ENCODE measurements at regions of chr5 and their contacts with region 1.

Region 1: DNA sequence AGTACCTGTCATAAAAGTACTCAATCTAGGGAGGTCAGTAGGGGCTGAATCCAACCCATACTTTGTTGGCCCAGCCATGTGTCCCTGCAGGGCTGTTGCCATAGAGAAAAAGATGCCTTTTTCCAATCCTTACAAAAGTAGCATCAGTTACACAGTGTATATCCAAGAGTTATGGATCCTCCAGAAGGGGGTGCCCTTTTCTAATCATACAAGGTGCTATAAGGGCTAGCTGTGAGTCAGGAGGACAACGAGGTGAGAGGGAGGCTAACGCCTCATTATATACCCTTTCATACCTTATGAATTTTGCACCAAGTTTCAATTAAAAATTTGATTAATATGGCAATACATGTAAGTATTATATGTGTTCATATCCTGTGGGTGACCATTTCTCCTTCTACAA is 4.8 kb downstream of the KIAA0825 start:
- DNase-seq: peak; percentile 33
- ATAC-seq: peak; percentile 43
- H3K4me3 ChIP-seq: no peak overlapping the region
- H3K27ac ChIP-seq: no peak overlapping the region
- H3K4me1 ChIP-seq: peaks cover 5 to 7% of the 10 kb centered on the region in 2 experiments
- H3K27me3 ChIP-seq: no peaks in the 10 kb centered on the region
- CTCF ChIP-seq: peak; percentile 31 to 51 (median 42); a peak in 5 of 6 replicates
- POLR2A ChIP-seq: no peak
- RAD21 ChIP-seq: peak; percentile 44

Region 2: GRCh38 chr5:94740286-94740685 is 126.7 kb after region 1 on chr5:
- CTCF ChIA-PET with region 1: interaction called, 5 read pairs
- POLR2A ChIA-PET with region 1: no interaction called
- RAD21 ChIA-PET with region 1: interaction called in 1 of 2 experiments, 4 read pairs
- intact Hi-C with region 1: loop called (anchors 5 kb)
- DNase-seq: no peak
- ATAC-seq: no peak
- H3K4me3 ChIP-seq: no peak overlapping the region
- H3K27ac ChIP-seq: no peak overlapping the region
- H3K4me1 ChIP-seq: no peaks in the 10 kb centered on the region
- H3K27me3 ChIP-seq: no peaks in the 10 kb centered on the region
- CTCF ChIP-seq: no peak
- POLR2A ChIP-seq: no peak
- RAD21 ChIP-seq: no peak

Region 3: GRCh38 chr5:94849821-94850736 is 236.5 kb after region 1 on chr5:
- CTCF ChIA-PET with region 1: no interaction called
- POLR2A ChIA-PET with region 1: no interaction called
- RAD21 ChIA-PET with region 1: interaction called in 1 of 2 experiments, 3 read pairs
- intact Hi-C with region 1: loop called (anchors 5 kb)
- DNase-seq: peak; percentile 59
- ATAC-seq: peak; percentile 96
- H3K4me3 ChIP-seq: peak overlapping the region in 1 of 2 experiments; percentile 18; a peak in 2 of 4 replicates
- H3K27ac ChIP-seq: no peak overlapping the region
- H3K4me1 ChIP-seq: 0 out of 4 replicates have a peak, but pooled peaks cover 0 to 4% of the 10 kb centered on the region in 2 experiments
- H3K27me3 ChIP-seq: no peaks in the 10 kb centered on the region
- CTCF ChIP-seq: peak; percentile 58 to 85 (median 69); a peak in 5 of 6 replicates
- POLR2A ChIP-seq: no peak
- RAD21 ChIP-seq: peak; percentile 83

Region 4: DNA sequence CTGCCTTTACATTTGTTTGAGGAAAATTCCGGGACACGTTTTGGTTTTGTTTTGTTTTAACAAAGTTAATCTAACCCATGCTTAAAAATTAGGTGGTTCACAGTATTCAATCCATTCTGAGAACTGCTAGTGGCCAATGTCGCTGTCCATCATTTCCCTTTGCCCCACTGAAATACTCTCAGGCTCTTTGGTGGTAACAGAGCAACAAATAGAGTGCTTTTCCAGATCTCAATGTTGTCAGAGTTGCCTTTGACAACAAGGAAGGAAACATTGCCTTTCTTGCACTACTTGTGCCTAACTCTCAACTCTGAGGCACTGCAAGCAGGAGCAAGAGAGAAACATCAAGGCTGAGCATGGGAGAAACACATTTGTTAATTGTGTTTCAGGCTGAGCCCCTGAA is 517.4 kb after region 1 on chr5:
- CTCF ChIA-PET with region 1: no interaction called
- POLR2A ChIA-PET with region 1: no interaction called
- RAD21 ChIA-PET with region 1: no interaction called
- intact Hi-C with region 1: no loop called
- DNase-seq: no peak
- ATAC-seq: no peak
- H3K4me3 ChIP-seq: no peak overlapping the region
- H3K27ac ChIP-seq: no peak overlapping the region
- H3K4me1 ChIP-seq: no peaks in the 10 kb centered on the region
- H3K27me3 ChIP-seq: no peaks in the 10 kb centered on the region
- CTCF ChIP-seq: no peak
- POLR2A ChIP-seq: no peak
- RAD21 ChIP-seq: no peak